ENCODE measurements at regions of chr16 and their contacts with region 1.

Region 1: GRCh38 chr16:1420111-1420540 is 421 bp downstream of the UQCC4 start:
- DNase-seq: peak in 1 of 14 experiments; percentile 21
- ATAC-seq: no peak
- H3K4me3 ChIP-seq: peak overlapping the region; percentile 97
- H3K4me3 Mint-ChIP-seq: peak overlapping the region; percentile 89
- H3K27ac ChIP-seq: peak overlapping the region; percentile 82 to 93
- H3K27ac Mint-ChIP-seq: peak overlapping the region; percentile 98
- H3K4me1 ChIP-seq: peaks cover 32% of the 10 kb centered on the region
- H3K4me1 Mint-ChIP-seq: peaks cover 11% of the 10 kb centered on the region
- H3K27me3 ChIP-seq: no peaks in the 10 kb centered on the region
- H3K27me3 Mint-ChIP-seq: no peaks in the 10 kb centered on the region
- CTCF ChIP-seq: no peak

Region 2: GRCh38 chr16:1363501-1364041 is 56.6 kb before region 1 on chr16:
- CTCF ChIA-PET with region 1: interaction called, 10 read pairs
- POLR2A ChIA-PET with region 1: interaction called, 4 read pairs
- intact Hi-C with region 1: no loop called
- DNase-seq: peak; percentile 48 to 82 (median 64)
- ATAC-seq: peak; percentile 98
- H3K4me3 ChIP-seq: no peak overlapping the region
- H3K4me3 Mint-ChIP-seq: no peak overlapping the region
- H3K27ac ChIP-seq: no peak overlapping the region
- H3K27ac Mint-ChIP-seq: no peak overlapping the region
- H3K4me1 ChIP-seq: no peaks in the 10 kb centered on the region
- H3K4me1 Mint-ChIP-seq: no peaks in the 10 kb centered on the region
- H3K27me3 ChIP-seq: no peaks in the 10 kb centered on the region
- H3K27me3 Mint-ChIP-seq: no peaks in the 10 kb centered on the region
- CTCF ChIP-seq: peak; percentile 82

Region 3: DNA sequence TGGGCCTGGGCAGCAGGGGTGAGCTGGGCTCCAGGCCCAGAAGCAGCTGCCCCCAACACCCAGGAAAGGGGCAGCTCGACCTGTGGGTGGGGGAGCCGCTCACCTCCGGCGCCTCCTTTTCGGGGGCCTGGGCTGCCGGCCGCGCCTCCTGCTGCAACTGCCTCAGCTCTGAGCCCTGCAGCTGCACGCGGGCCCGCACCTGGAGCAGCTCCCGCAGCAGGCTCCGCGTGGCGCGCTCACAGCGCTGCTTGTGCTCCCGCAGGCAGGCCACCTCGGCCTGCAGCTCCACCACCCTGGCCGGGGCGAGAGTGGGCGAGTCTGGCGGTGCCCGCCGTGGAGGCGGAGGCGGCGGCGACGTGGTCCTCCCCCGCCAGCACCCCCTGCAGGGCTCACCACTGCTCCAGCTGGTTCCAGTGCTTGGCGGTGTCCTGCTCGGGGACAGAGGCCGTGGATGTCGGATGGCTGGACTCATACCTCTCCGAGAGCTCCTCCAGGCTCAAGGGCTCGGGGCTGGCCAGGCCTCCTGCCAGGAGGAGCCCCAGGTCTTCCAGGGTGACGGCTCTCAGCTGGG is 23.4 kb after region 1 on chr16:
- CTCF ChIA-PET with region 1: no interaction called
- POLR2A ChIA-PET with region 1: no interaction called
- intact Hi-C with region 1: no loop called
- DNase-seq: no peak
- ATAC-seq: no peak
- H3K4me3 ChIP-seq: no peak overlapping the region
- H3K4me3 Mint-ChIP-seq: no peak overlapping the region
- H3K27ac ChIP-seq: no peak overlapping the region
- H3K27ac Mint-ChIP-seq: no peak overlapping the region
- H3K4me1 ChIP-seq: no peaks in the 10 kb centered on the region
- H3K4me1 Mint-ChIP-seq: no peaks in the 10 kb centered on the region
- H3K27me3 ChIP-seq: no peaks in the 10 kb centered on the region
- H3K27me3 Mint-ChIP-seq: no peaks in the 10 kb centered on the region
- CTCF ChIP-seq: no peak

Region 4: GRCh38 chr16:1474796-1475551 is 54.8 kb after region 1 on chr16 and contains the start of gene CLCN7:
- CTCF ChIA-PET with region 1: no interaction called
- POLR2A ChIA-PET with region 1: interaction called, 4 read pairs
- intact Hi-C with region 1: loop called (anchors 2 to 10 kb)
- DNase-seq: peak; percentile 70 to 94 (median 84)
- ATAC-seq: peak; percentile 87
- H3K4me3 ChIP-seq: peak within 1 kb of the TSS; percentile 62
- H3K4me3 Mint-ChIP-seq: peak within 1 kb of the TSS; percentile 88
- H3K27ac ChIP-seq: peak within 1 kb of the TSS; percentile 72 to 84
- H3K27ac Mint-ChIP-seq: peak within 1 kb of the TSS; percentile 89
- H3K4me1 ChIP-seq: peaks cover 41% of the 10 kb centered on the region
- H3K4me1 Mint-ChIP-seq: peaks cover 43% of the 10 kb centered on the region
- H3K27me3 ChIP-seq: no peaks in the 10 kb centered on the region
- H3K27me3 Mint-ChIP-seq: no peaks in the 10 kb centered on the region
- CTCF ChIP-seq: no peak
- total RNA-seq, gene CLCN7: 70.5 to 76.2 TPM

Region 5: GRCh38 chr16:1499756-1500464 is 79.8 kb after region 1 on chr16:
- CTCF ChIA-PET with region 1: no interaction called
- POLR2A ChIA-PET with region 1: no interaction called
- intact Hi-C with region 1: no loop called
- DNase-seq: peak in 1 of 14 experiments; percentile 18
- ATAC-seq: no peak
- H3K4me3 ChIP-seq: no peak overlapping the region
- H3K4me3 Mint-ChIP-seq: no peak overlapping the region
- H3K27ac ChIP-seq: no peak overlapping the region
- H3K27ac Mint-ChIP-seq: no peak overlapping the region
- H3K4me1 ChIP-seq: peaks cover 2% of the 10 kb centered on the region
- H3K4me1 Mint-ChIP-seq: no peaks in the 10 kb centered on the region
- H3K27me3 ChIP-seq: no peaks in the 10 kb centered on the region
- H3K27me3 Mint-ChIP-seq: no peaks in the 10 kb centered on the region
- CTCF ChIP-seq: no peak

Region 6: DNA sequence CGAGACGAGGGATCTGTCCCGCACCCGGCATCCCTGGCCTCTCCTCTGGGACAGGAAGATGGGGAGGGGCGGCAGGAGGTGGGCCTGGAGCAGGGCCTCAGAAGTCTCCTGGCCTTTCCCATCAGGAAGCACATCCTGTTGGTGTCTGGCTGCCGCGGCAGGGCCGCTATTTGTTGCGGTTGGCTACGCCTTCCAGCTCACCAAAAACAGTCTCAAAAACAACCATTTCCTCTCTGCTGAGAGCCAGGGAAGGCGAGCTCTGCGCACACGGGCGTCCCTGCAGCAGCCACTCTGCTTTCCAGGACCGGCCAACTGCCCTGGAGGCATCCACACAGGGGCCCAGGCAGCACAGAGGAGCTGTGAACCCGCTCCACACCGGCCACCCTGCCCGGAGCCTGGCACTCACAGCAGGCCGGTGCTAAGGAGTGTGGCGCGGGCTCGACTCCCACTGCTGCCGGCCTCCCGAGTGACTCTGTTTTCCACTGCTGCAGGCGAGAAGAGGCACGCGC is 113.4 kb after region 1 on chr16 and contains the start of gene TMEM204:
- CTCF ChIA-PET with region 1: no interaction called
- POLR2A ChIA-PET with region 1: interaction called, 16 read pairs
- intact Hi-C with region 1: loop called (anchors 2 to 5 kb)
- DNase-seq: peak in 13 of 14 experiments; percentile 40 to 75 (median 58)
- ATAC-seq: peak; percentile 47
- H3K4me3 ChIP-seq: peak within 1 kb of the TSS; percentile 98
- H3K4me3 Mint-ChIP-seq: peak within 1 kb of the TSS; percentile 99
- H3K27ac ChIP-seq: peak within 1 kb of the TSS; percentile 55 to 56
- H3K27ac Mint-ChIP-seq: peak within 1 kb of the TSS; percentile 98
- H3K4me1 ChIP-seq: peaks cover 64% of the 10 kb centered on the region
- H3K4me1 Mint-ChIP-seq: peaks cover 59% of the 10 kb centered on the region
- H3K27me3 ChIP-seq: no peaks in the 10 kb centered on the region
- H3K27me3 Mint-ChIP-seq: no peaks in the 10 kb centered on the region
- CTCF ChIP-seq: no peak
- total RNA-seq, gene TMEM204: 20.5 to 22.1 TPM

Region 7: GRCh38 chr16:1610276-1611017 is 190.3 kb after region 1 on chr16:
- CTCF ChIA-PET with region 1: interaction called, 4 read pairs
- POLR2A ChIA-PET with region 1: interaction called, 7 read pairs
- intact Hi-C with region 1: loop called (anchors 2 to 5 kb)
- DNase-seq: peak; percentile 85 to 96 (median 90)
- ATAC-seq: peak; percentile 65
- H3K4me3 ChIP-seq: peak overlapping the region; percentile 53
- H3K4me3 Mint-ChIP-seq: peak overlapping the region; percentile 72
- H3K27ac ChIP-seq: peak overlapping the region; percentile 45 to 46
- H3K27ac Mint-ChIP-seq: peak overlapping the region; percentile 89
- H3K4me1 ChIP-seq: peaks cover 44% of the 10 kb centered on the region
- H3K4me1 Mint-ChIP-seq: peaks cover 24% of the 10 kb centered on the region
- H3K27me3 ChIP-seq: peaks cover 6 to 10% of the 10 kb centered on the region in 2 experiments
- H3K27me3 Mint-ChIP-seq: peaks cover 14% of the 10 kb centered on the region
- CTCF ChIP-seq: no peak

Region 8: DNA sequence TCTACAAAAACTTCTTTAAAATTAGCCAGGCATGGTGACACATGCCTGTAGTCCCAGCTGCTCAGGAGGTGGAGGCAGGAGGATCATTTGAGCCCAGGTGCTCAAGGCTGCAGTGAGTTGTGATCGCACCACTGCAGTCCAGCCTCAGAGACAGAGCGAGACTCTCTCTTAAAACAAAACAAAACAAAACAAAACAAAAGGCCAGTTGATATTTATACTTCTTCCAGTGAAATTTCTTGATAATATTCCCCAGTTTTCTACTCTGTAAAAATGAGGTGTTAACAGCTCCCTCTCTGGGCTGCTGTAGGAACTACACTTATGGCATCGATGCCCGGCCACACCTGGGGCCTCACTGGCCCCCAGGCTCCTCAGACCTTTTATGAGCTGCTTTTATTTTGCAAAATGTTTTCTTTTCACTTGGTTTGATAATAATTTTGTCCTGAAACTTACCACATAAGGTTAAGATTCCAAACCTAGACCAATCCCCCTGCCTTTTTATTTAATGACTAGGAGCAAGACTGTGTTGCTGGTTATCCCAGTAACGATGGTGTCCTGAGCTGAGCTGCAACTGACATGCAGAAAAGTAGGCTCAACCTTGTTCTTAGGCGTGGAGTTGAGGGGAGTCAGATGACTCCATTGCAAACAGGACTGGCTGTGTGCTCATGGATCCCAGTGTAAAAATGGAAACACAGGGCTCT is 303.5 kb after region 1 on chr16:
- CTCF ChIA-PET with region 1: no interaction called
- POLR2A ChIA-PET with region 1: no interaction called
- intact Hi-C with region 1: no loop called
- DNase-seq: peak in 12 of 14 experiments; percentile 14 to 70 (median 39)
- ATAC-seq: peak; percentile 41
- H3K4me3 ChIP-seq: no peak overlapping the region
- H3K4me3 Mint-ChIP-seq: peak overlapping the region; percentile 5
- H3K27ac ChIP-seq: no peak overlapping the region
- H3K27ac Mint-ChIP-seq: peak overlapping the region; percentile 61
- H3K4me1 ChIP-seq: peaks cover 51% of the 10 kb centered on the region
- H3K4me1 Mint-ChIP-seq: peaks cover 45% of the 10 kb centered on the region
- H3K27me3 ChIP-seq: no peaks in the 10 kb centered on the region
- H3K27me3 Mint-ChIP-seq: no peaks in the 10 kb centered on the region
- CTCF ChIP-seq: peak; percentile 91

Region 9: DNA sequence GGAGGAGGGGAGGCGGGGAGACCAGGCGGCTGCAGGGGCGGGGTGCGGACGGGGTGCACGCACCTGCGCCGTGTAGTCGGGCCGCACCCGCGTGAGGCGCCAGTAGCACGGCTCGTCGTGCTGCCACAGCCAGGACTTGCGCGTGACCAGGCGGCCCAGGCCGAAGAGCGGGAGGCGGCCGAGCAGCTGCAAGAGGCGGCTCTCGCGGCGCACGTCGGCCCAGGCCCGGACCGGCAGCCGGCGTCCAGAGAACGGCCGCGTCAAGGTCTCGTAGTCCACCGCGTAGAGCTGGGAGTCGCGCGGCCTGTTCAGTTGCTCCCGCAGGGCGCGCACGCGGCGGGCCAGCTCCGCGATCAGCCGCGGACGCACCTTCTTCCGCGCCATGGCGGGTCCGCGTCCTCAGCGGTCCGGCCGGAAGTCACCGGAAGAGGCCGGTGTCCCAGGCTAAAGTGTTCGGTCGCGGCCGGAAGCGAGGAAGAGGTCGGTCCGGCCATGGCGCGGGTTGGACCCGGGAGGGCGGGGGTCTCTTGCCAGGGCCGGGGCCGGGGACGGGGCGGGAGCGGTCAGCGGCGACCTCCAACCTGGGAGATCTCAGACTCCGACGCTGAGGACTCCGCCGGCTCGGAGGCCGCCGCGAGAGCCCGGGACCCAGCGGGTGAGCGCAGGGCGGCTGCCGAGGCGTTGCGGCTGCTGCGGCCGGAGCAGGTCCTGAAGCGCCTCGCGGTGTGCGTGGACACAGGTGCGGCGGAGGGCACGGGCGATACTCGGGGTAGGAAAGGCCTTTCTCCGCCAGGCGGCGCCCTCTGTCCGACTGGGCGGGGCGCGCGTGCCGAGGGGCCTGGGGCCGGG is 352.8 kb after region 1 on chr16 and contains the starts of genes EME2 and MRPS34:
- CTCF ChIA-PET with region 1: interaction called, 3 read pairs
- POLR2A ChIA-PET with region 1: no interaction called
- intact Hi-C with region 1: loop called in 1 of 2 experiments (anchors 2 kb)
- DNase-seq: peak; percentile 61 to 90 (median 77)
- ATAC-seq: peak; percentile 49
- H3K4me3 ChIP-seq: peak within 1 kb of the TSS; percentile 89
- H3K4me3 Mint-ChIP-seq: peak within 1 kb of the TSS; percentile 98
- H3K27ac ChIP-seq: peak within 1 kb of the TSS; percentile 55 to 69
- H3K27ac Mint-ChIP-seq: peak within 1 kb of the TSS; percentile 92
- H3K4me1 ChIP-seq: peaks cover 42% of the 10 kb centered on the region
- H3K4me1 Mint-ChIP-seq: peaks cover 16% of the 10 kb centered on the region
- H3K27me3 ChIP-seq: no peaks in the 10 kb centered on the region
- H3K27me3 Mint-ChIP-seq: no peaks in the 10 kb centered on the region
- CTCF ChIP-seq: peak; percentile 79
- total RNA-seq, gene EME2: 28.6 to 30.8 TPM
- total RNA-seq, gene MRPS34: 25.5 to 26.9 TPM

Measured in CD4-positive, alpha-beta T cell (primary cell).